A549 (cell line): ENCODE measurements at regions of chr1 and their contacts with region 1.

Region 1: GRCh38 chr1:112466078-112466660 is 42.6 kb upstream of the WNT2B start:
- DNase-seq: peak; percentile 43 to 88
- ATAC-seq: peak; percentile 93 to 97
- H3K4me3 ChIP-seq: peak overlapping the region; percentile 27; the same call in 2 of the 3 replicates
- H3K27ac ChIP-seq: peak overlapping the region; percentile 61 to 73; a peak in 5 of 6 replicates
- H3K4me1 ChIP-seq: peaks cover 7% of the 10 kb centered on the region; the same call in 1 of the 3 replicates
- CTCF ChIP-seq: peak; percentile 65
- EP300 ChIP-seq: no peak
- POLR2A ChIP-seq: no peak
- RAD21 ChIP-seq: peak; percentile 69 to 72

Region 2: DNA sequence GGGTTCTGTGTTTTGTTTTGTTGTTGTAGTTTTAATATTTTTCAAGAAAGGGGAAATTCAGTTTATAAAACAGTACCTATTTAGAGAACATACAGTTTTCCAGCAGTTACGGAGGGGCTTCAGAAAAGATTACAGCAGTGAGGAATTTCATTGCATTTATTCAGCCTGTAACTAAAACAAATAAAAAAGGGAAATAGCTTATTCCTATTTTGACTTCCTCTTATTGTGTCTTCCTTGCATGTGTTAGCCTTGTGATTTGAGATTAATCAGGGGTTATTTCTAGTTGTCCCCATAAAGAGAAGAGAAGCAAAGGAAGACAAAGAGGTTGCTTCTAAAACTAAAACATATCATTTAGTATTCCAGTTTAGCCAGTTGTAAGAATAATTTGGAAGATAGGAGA is 35.1 kb before region 1 on chr1:
- CTCF ChIA-PET with region 1: interaction called, 12 read pairs
- POLR2A ChIA-PET with region 1: no interaction called
- DNase-seq: no peak
- ATAC-seq: no peak
- H3K4me3 ChIP-seq: no peak overlapping the region
- H3K27ac ChIP-seq: no peak overlapping the region
- H3K4me1 ChIP-seq: no peaks in the 10 kb centered on the region
- CTCF ChIP-seq: no peak
- EP300 ChIP-seq: no peak
- POLR2A ChIP-seq: no peak
- RAD21 ChIP-seq: no peak

Region 3: DNA sequence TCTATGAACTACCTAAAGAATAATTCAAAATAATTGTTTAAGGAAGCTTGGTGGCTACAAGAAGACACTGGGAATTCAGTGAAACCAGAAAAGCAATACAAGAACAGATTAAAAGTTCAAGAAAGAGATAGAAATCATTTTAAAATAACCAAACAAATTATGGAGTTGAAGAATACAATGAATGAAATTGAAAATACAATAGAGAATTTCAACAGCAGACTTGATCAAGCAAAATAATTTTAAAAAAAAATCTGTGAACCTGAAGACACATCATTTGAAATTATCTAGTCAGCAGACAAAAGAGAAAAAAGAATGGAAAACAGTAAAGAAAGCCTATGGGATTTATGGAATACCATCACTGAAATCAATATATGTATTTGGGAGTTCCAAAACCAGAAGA is 11.4 kb after region 1 on chr1:
- CTCF ChIA-PET with region 1: interaction called, 11 read pairs
- POLR2A ChIA-PET with region 1: no interaction called
- DNase-seq: no peak
- ATAC-seq: no peak
- H3K4me3 ChIP-seq: no peak overlapping the region
- H3K27ac ChIP-seq: no peak overlapping the region
- H3K4me1 ChIP-seq: no peaks in the 10 kb centered on the region
- CTCF ChIP-seq: no peak
- EP300 ChIP-seq: no peak
- POLR2A ChIP-seq: no peak
- RAD21 ChIP-seq: no peak

Region 4: DNA sequence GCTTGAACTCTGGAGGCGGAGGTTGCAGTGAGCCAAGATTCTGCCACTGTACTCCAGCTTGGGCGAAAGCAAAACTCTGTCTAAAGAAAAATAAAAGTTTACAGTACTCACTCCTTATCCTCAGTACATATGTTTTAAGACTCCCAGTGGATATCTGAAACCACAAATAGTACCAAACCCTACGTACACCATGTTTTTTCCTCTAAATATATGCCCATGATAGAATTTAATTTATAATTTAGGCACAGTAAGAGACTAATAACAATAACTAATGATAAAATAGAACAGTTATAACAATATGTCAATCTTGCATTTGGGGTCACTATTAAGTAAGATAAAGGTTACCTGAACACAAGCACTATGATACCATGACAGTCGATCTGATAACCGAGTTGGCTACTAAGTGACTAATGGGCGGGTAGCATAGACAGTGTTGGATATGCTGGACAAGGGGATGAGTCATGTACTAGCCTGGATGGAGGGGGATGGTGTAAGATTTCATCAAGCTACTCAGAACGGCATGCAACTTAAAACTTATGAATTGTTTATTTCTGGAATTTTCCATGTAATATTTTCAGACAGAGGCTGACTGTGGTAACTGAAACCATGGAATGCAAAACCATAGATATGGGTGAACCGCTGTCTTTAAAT is 109.1 kb after region 1 on chr1:
- CTCF ChIA-PET with region 1: no interaction called
- POLR2A ChIA-PET with region 1: no interaction called
- DNase-seq: peak; percentile 16 to 71
- ATAC-seq: peak; percentile 91 to 99
- H3K4me3 ChIP-seq: no peak overlapping the region
- H3K27ac ChIP-seq: peak overlapping the region; percentile 66 to 77; a peak in 5 of 6 replicates
- H3K4me1 ChIP-seq: peaks cover 14% of the 10 kb centered on the region
- CTCF ChIP-seq: no peak
- EP300 ChIP-seq: no peak
- POLR2A ChIP-seq: no peak
- RAD21 ChIP-seq: no peak